Prostate gland (tissue), 2 donors: ENCODE measurements at regions of chr16 and their contacts with region 1.

Region 1: DNA sequence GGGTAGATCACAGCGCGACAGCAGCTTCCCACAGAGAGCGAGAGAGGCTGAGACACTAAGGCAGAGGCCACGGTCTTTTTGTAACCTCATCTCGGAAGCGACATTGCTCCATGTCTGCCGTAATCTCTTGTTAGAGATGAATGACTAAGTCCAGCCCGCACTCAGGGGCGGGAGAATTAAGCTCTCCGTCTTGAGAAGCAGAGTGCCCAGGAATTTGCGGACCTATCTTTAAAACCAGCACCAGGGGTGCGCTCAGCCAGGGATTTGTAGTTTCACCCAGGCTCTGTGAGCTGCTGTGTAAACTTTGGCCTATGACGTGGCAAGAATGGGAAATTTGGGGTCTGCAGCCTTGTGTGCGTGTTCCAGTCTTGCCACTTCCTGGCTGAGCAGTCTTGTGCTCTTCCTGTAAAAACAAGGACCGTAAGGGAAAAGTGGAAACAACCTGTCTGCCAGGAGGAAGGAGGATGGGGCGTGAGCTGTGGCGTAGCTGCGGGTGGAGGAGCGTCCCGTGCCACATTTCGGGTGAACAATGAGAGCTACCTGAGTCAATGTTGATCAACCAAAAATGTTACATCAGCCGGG is 16.0 kb upstream of the JPH3 start:
- DNase-seq: no peak
- H3K4me3 ChIP-seq: no peak overlapping the region
- H3K27ac ChIP-seq: no peak overlapping the region
- H3K4me1 ChIP-seq: no peaks in the 10 kb centered on the region
- H3K27me3 ChIP-seq: peaks cover 16% of the 10 kb centered on the region
- CTCF ChIP-seq: no peak
- POLR2A ChIP-seq: no peak

Region 2: GRCh38 chr16:87636072-87636684 is 49.9 kb after region 1 on chr16:
- intact Hi-C with region 1: loop called (anchors 5 kb)
- DNase-seq: peak; percentile 47
- H3K4me3 ChIP-seq: no peak overlapping the region
- H3K27ac ChIP-seq: no peak overlapping the region
- H3K4me1 ChIP-seq: no peaks in the 10 kb centered on the region
- H3K27me3 ChIP-seq: peaks cover 8% of the 10 kb centered on the region
- CTCF ChIP-seq: peak in 3 of 4 experiments; percentile 32 to 64 (median 60)
- POLR2A ChIP-seq: no peak

Region 3: DNA sequence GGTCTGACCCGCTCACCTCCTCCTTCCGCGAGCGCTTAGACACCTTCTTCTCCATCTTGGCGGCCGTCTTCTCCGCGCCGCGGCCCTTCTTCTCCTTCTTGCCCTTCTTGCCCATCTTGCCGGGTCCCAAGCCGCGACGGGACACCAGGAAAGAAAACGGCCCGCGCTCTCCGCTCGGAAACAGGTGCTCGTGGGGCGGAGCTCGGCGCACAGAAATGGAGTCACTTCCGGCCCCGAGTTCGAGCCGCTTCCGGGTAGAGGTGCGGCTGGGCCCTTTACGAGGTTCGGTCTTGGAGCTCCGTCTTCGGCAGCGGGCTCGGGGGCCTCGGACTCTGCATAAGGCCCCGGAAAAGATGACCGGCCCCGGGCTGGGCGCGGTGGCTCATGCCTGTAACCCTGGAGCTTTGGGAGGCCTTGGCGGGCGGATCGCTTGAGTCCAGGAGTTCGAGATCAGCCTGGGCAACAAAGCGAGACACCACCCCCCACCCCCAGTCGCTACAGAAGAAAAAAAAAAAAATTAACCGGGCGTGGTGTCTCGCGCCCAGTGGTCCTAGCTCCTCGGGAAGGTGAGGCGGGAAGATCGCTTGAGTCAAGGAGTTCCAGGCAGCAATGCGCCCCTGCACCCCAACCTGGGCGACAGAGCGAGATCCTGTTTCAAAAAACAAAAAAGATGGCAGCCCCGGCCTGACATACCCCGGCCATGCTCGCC is 179.6 kb after region 1 on chr16 and contains the start of gene KLHDC4:
- intact Hi-C with region 1: loop called (anchors 5 kb)
- DNase-seq: peak; percentile 89
- H3K4me3 ChIP-seq: peak within 1 kb of the TSS; percentile 89 to 98
- H3K27ac ChIP-seq: peak within 1 kb of the TSS; percentile 75 to 84
- H3K4me1 ChIP-seq: peaks cover 13% of the 10 kb centered on the region
- H3K27me3 ChIP-seq: no peaks in the 10 kb centered on the region
- CTCF ChIP-seq: no peak
- POLR2A ChIP-seq: peak; percentile 52
- total RNA-seq, gene KLHDC4: 28.2 to 56.4 TPM